Gastrocnemius medialis (tissue), 4 donors: ENCODE measurements at regions of chr11 and their contacts with region 1.

Region 1: GRCh38 chr11:107384144-107384852 is 73.3 kb downstream of the CWF19L2 start:
- DNase-seq: no peak
- ATAC-seq: no peak
- H3K4me3 ChIP-seq: no peak overlapping the region
- H3K27ac ChIP-seq: no peak overlapping the region
- H3K4me1 ChIP-seq: no peaks in the 10 kb centered on the region
- H3K27me3 ChIP-seq: no peaks in the 10 kb centered on the region
- CTCF ChIP-seq: no peak
- POLR2A ChIP-seq: no peak

Region 2: DNA sequence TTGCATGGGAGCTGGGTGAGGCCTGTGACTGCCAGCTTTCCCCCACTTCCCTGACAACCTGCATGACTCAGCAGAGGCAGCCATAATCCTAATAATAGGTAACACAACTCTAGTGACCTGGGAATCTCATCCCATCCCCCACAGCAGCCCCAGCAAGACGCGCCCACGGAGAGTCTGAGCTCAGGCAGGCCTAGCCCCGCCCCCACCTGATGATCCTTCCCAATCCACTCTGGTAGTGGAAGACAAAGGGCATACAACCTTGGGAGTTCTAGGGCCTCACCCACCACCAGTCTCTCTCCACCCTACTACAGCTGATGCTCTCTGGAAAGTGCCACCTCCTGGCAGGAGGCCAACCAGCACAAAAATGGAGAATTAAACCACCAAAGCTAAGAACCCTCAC is 13.1 kb after region 1 on chr11:
- in situ Hi-C with region 1: no loop called
- intact Hi-C with region 1: no loop called
- DNase-seq: no peak
- ATAC-seq: no peak
- H3K4me3 ChIP-seq: no peak overlapping the region
- H3K27ac ChIP-seq: no peak overlapping the region
- H3K4me1 ChIP-seq: no peaks in the 10 kb centered on the region
- H3K27me3 ChIP-seq: no peaks in the 10 kb centered on the region
- CTCF ChIP-seq: no peak
- POLR2A ChIP-seq: no peak

Region 3: GRCh38 chr11:107430525-107430924 is 46.2 kb after region 1 on chr11:
- in situ Hi-C with region 1: no loop called
- intact Hi-C with region 1: loop called (anchors 5 kb)
- DNase-seq: no peak
- ATAC-seq: no peak
- H3K4me3 ChIP-seq: no peak overlapping the region
- H3K27ac ChIP-seq: no peak overlapping the region
- H3K4me1 ChIP-seq: no peaks in the 10 kb centered on the region
- H3K27me3 ChIP-seq: no peaks in the 10 kb centered on the region
- CTCF ChIP-seq: no peak
- POLR2A ChIP-seq: no peak